ENCODE measurements at regions of chr1 and their contacts with region 1.

Region 1: DNA sequence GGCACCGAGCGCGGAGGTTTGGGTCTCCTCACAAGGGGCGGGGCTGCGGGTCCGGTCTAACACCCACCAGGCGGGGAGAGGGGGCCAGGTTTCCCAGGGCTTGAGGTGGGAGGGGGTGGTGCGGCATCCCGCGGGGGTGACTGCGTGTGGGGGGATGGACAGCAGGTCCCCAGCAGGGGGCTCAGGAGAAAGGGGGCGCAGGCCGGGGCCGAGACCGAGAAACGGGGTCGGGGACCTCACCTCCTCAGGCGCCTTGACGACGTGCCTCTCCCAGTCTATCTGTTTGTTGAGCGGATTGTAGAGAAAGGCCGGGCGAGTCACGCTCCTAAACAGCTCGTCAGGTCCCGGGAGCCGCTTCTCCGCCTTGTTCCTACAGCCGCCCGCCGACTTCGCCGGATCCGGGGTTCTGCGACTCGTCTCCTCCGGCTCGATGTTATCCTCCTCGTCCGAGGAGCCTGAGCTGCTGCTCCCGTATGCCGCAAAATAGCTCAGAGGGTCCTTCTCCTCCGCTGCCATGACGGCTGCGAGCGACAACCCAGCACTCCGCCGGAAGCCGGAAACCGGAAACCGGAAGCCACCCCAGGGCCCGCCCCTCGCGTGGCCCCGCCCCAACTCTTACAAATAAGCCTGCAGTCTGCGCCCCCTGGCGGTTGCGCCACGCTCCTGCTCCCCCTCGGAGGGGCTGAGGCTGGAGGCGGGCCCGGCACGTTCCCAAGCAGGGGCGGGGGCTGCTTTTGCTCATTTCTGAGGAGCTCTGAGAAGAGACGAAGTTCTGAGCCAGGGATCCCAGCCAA is at the start of gene C1orf52:
- DNase-seq: peak; percentile 83
- H3K4me3 ChIP-seq: peak within 1 kb of the TSS; percentile 89
- H3K27ac ChIP-seq: peak within 1 kb of the TSS; percentile 42
- H3K27me3 ChIP-seq: no peaks in the 10 kb centered on the region
- CTCF ChIP-seq: peak; percentile 91
- polyA plus RNA-seq, gene C1orf52: 28.0 and 31.2 TPM in 2 replicates

Region 2: DNA sequence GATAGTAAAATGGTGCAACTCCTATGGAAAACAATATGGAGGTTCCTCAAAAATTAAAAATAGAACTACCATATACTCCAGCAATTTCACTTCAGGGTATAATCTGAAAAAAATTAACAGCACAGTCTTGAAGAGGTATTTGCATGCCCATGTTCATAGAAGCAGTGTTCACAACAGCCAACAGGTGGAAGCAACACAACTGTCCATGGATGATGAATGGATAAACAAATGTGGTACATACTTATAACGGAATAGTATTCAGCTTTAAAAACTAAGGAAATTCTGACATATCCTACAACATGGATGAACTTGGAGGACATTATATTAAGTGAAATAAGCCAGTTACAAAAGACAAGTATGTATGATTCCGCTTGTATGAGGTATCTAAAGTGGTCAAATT is 1268.6 kb before region 1 on chr1:
- CTCF ChIA-PET with region 1: no interaction called
- POLR2A ChIA-PET with region 1: no interaction called
- DNase-seq: no peak
- H3K4me3 ChIP-seq: no peak overlapping the region
- H3K27ac ChIP-seq: no peak overlapping the region
- H3K27me3 ChIP-seq: no peaks in the 10 kb centered on the region
- CTCF ChIP-seq: no peak

Region 3: DNA sequence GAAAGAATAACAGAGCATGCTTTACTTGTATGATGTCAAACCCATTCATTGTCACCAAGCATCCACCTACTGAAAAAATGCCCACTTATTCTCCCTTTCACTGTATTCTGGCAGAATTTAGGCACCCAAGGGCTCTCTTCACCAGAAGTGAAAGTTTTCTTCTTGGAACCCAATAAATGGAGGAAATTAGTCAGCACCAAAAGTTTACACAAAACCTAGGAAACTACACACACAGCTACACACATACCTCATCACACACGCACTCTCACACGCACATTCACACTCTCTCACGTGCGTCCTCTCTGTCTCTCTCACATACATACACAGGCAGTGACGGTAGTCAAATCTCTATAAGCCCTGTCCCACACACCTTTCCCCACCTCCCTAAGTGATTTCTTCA is 300.0 kb before region 1 on chr1:
- CTCF ChIA-PET with region 1: interaction called, 17 read pairs
- POLR2A ChIA-PET with region 1: no interaction called
- DNase-seq: no peak
- H3K4me3 ChIP-seq: no peak overlapping the region
- H3K27ac ChIP-seq: no peak overlapping the region
- H3K27me3 ChIP-seq: no peaks in the 10 kb centered on the region
- CTCF ChIP-seq: no peak

Region 4: DNA sequence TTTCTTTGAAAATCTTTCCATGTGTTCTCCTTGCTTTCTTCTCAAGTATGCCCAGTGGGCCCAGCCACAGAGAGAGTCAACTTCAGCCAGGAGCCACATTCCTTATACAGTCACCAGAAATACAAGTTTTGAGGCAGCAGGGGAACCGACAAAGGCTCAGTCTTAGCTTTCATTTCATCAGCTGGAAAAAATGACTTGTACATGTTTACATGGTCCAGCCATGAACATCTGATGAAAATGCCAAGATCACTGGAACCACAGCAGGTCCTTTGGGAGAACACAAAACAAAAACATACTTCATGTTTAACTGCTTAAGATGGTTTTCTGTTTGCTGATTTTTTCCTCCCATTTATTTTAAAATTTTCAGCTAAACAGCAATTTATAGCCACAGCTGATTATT is 131.0 kb before region 1 on chr1:
- CTCF ChIA-PET with region 1: interaction called, 17 read pairs
- POLR2A ChIA-PET with region 1: no interaction called
- DNase-seq: no peak
- H3K4me3 ChIP-seq: no peak overlapping the region
- H3K27ac ChIP-seq: no peak overlapping the region
- H3K27me3 ChIP-seq: no peaks in the 10 kb centered on the region
- CTCF ChIP-seq: no peak

Region 5: GRCh38 chr1:85180869-85181268 is 78.4 kb before region 1 on chr1:
- CTCF ChIA-PET with region 1: interaction called, 16 read pairs
- POLR2A ChIA-PET with region 1: no interaction called
- DNase-seq: no peak
- H3K4me3 ChIP-seq: no peak overlapping the region
- H3K27ac ChIP-seq: no peak overlapping the region
- H3K27me3 ChIP-seq: no peaks in the 10 kb centered on the region
- CTCF ChIP-seq: no peak

Region 6: DNA sequence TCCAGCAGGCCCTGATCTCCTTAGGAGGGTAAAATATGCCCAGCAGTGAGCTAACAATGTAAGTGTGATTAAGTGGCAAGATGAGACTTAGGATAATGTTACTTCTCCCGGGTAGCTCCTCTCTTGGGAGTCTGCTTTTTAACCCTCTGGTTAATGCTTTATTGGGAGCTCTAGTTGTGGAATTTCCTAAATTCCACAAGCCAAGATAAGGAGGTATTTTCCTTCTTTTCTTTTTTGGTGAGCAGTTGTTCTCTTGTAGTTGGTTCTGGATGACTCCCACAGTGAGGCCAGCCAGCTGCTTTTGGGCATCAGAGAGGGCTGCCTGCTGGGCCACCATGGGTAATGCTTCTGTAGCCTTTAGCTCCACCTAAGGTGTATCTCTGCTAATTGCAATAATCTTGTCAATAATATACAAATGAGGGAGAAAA is 19.1 kb before region 1 on chr1:
- CTCF ChIA-PET with region 1: interaction called, 37 read pairs
- POLR2A ChIA-PET with region 1: no interaction called
- DNase-seq: no peak
- H3K4me3 ChIP-seq: no peak overlapping the region
- H3K27ac ChIP-seq: no peak overlapping the region
- H3K27me3 ChIP-seq: no peaks in the 10 kb centered on the region
- CTCF ChIP-seq: no peak